Caco-2 (cell line): ENCODE measurements at regions of chr2 and their contacts with region 1.

Region 1: GRCh38 chr2:120174963-120175581 is 48.1 kb downstream of the TMEM185B start:
- DNase-seq: peak in 1 of 2 experiments; percentile 61
- H3K4me3 ChIP-seq: no peak overlapping the region
- H3K4me3 Mint-ChIP-seq: no peak overlapping the region
- H3K27ac Mint-ChIP-seq: no peak overlapping the region
- H3K4me1 ChIP-seq: no peaks in the 10 kb centered on the region
- H3K4me1 Mint-ChIP-seq: no peaks in the 10 kb centered on the region
- H3K27me3 ChIP-seq: no peaks in the 10 kb centered on the region
- H3K27me3 Mint-ChIP-seq: no peaks in the 10 kb centered on the region
- CTCF ChIP-seq: peak; percentile 73 to 77

Region 2: DNA sequence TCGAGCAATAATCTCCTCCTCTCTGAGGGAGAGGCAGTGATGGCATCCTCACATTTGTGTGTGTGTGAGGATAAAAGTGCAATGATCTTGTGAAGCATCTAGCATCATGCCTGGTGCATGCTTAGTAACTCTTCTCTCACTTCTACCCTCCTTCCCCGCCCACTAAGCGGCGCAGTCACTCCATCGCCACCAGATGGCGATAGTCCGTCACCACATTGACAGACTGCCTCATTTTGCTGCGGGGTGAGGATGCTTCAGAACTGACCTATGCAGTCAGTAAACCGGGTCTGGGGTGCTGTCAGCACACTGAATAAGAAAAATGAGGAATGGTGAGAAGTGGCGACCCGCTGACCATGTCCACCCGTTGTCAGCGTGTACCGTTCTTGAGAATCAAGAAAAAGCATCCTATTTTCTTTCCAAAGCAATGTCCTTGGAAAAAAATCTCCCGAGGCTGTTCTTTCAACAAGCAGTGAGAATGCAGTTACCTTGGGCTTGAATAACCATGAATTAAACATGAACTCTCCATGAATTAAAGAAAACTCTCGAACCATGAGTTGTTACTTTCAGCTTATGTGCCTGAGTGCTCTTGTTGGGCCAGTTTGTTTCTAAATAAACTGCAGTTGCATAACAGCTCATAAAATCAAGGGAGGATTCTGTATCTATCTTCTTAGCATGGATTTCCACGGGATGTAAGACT is 533.4 kb before region 1 on chr2:
- CTCF ChIA-PET with region 1: no interaction called
- POLR2A ChIA-PET with region 1: no interaction called
- intact Hi-C with region 1: loop called (anchors 1 kb)
- DNase-seq: peak; percentile 73 to 79
- H3K4me3 ChIP-seq: no peak overlapping the region
- H3K4me3 Mint-ChIP-seq: no peak overlapping the region
- H3K27ac Mint-ChIP-seq: no peak overlapping the region
- H3K4me1 ChIP-seq: no peaks in the 10 kb centered on the region
- H3K4me1 Mint-ChIP-seq: peaks cover 5% of the 10 kb centered on the region
- H3K27me3 ChIP-seq: no peaks in the 10 kb centered on the region
- H3K27me3 Mint-ChIP-seq: peaks cover 27% of the 10 kb centered on the region
- CTCF ChIP-seq: peak; percentile 91 to 98

Region 3: GRCh38 chr2:119702918-119703401 is 472.1 kb before region 1 on chr2:
- CTCF ChIA-PET with region 1: interaction called, 13 read pairs
- POLR2A ChIA-PET with region 1: no interaction called
- intact Hi-C with region 1: loop called (anchors 1 kb)
- DNase-seq: peak; percentile 74 to 85
- H3K4me3 ChIP-seq: no peak overlapping the region
- H3K4me3 Mint-ChIP-seq: no peak overlapping the region
- H3K27ac Mint-ChIP-seq: no peak overlapping the region
- H3K4me1 ChIP-seq: no peaks in the 10 kb centered on the region
- H3K4me1 Mint-ChIP-seq: peaks cover 12% of the 10 kb centered on the region
- H3K27me3 ChIP-seq: no peaks in the 10 kb centered on the region
- H3K27me3 Mint-ChIP-seq: no peaks in the 10 kb centered on the region
- CTCF ChIP-seq: peak; percentile 97

Region 4: DNA sequence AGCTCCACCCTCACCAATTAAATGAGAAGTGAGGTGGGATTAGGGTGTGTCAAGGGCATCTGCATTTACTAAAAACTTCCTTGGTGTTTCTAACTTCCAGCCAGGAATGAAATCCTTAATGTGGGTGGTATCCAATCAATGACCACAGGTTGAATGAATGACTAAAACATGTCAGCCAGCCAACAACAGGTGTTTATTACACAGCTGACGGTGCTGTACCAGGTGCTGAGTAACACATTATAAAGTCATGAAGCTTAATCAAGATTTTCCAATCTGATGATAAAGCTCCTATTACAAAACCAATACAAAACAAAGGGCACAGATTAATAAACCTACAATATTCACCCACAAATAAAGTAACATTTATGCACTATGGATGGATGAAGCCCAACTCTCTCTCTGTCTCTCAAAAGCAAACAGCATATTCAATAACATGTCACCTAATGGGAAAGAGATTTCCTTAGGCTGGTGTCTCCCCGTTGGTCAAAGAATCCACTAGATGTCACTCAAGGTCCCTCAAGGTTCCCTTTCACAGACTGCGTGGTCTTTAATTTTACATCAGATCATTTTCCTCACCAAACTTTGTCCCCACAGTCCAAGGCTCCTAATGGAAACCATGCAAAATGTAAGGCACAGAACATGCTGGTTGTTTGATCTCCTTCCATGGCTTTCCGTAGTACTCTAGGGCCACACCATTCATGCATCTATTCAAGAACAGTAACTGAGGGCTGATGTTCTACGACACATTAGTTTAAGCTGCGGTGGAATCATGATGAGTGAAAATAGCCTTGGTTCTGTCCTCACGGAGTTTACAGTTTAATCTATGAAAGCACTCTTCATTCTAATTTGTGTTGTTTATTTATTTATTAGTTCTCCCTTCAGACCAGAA is 421.8 kb before region 1 on chr2:
- CTCF ChIA-PET with region 1: interaction called, 4 read pairs
- POLR2A ChIA-PET with region 1: no interaction called
- intact Hi-C with region 1: loop called (anchors 1 kb)
- DNase-seq: peak in 1 of 2 experiments; percentile 66
- H3K4me3 ChIP-seq: no peak overlapping the region
- H3K4me3 Mint-ChIP-seq: no peak overlapping the region
- H3K27ac Mint-ChIP-seq: no peak overlapping the region
- H3K4me1 ChIP-seq: no peaks in the 10 kb centered on the region
- H3K4me1 Mint-ChIP-seq: peaks cover 1% of the 10 kb centered on the region
- H3K27me3 ChIP-seq: no peaks in the 10 kb centered on the region
- H3K27me3 Mint-ChIP-seq: peaks cover 5% of the 10 kb centered on the region
- CTCF ChIP-seq: peak; percentile 66 to 70

Region 5: GRCh38 chr2:119826370-119826961 is 348.6 kb before region 1 on chr2:
- CTCF ChIA-PET with region 1: no interaction called
- POLR2A ChIA-PET with region 1: no interaction called
- intact Hi-C with region 1: loop called (anchors 10 kb)
- DNase-seq: peak; percentile 48 to 65
- H3K4me3 ChIP-seq: no peak overlapping the region
- H3K4me3 Mint-ChIP-seq: no peak overlapping the region
- H3K27ac Mint-ChIP-seq: no peak overlapping the region
- H3K4me1 ChIP-seq: 0 out of 2 replicates have a peak, but pooled peaks cover 4% of the 10 kb centered on the region
- H3K4me1 Mint-ChIP-seq: peaks cover 7% of the 10 kb centered on the region
- H3K27me3 ChIP-seq: no peaks in the 10 kb centered on the region
- H3K27me3 Mint-ChIP-seq: no peaks in the 10 kb centered on the region
- CTCF ChIP-seq: peak; percentile 71 to 90

Region 6: DNA sequence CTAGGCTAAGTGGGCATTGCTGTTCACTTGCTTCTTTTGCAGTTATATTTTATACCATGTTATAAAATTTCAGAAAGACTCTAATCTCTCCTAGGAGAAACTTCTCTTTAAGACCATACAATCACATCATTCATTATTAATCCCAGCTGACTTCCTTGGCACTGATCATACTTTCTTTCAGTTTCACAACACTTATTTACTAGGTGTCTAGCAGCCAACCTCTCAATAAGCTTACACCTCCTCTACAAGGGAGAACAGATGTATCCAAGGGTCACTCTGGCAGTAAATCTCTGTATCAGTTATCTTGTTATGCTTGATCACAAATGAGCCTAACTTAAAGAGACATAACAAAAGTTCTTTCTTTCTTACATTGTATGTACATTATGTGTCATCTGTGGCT is 232.0 kb before region 1 on chr2:
- CTCF ChIA-PET with region 1: no interaction called
- POLR2A ChIA-PET with region 1: no interaction called
- intact Hi-C with region 1: loop called (anchors 10 kb)
- DNase-seq: no peak
- H3K4me3 ChIP-seq: no peak overlapping the region
- H3K4me3 Mint-ChIP-seq: no peak overlapping the region
- H3K27ac Mint-ChIP-seq: no peak overlapping the region
- H3K4me1 ChIP-seq: no peaks in the 10 kb centered on the region
- H3K4me1 Mint-ChIP-seq: no peaks in the 10 kb centered on the region
- H3K27me3 ChIP-seq: no peaks in the 10 kb centered on the region
- H3K27me3 Mint-ChIP-seq: no peaks in the 10 kb centered on the region
- CTCF ChIP-seq: no peak

Region 7: DNA sequence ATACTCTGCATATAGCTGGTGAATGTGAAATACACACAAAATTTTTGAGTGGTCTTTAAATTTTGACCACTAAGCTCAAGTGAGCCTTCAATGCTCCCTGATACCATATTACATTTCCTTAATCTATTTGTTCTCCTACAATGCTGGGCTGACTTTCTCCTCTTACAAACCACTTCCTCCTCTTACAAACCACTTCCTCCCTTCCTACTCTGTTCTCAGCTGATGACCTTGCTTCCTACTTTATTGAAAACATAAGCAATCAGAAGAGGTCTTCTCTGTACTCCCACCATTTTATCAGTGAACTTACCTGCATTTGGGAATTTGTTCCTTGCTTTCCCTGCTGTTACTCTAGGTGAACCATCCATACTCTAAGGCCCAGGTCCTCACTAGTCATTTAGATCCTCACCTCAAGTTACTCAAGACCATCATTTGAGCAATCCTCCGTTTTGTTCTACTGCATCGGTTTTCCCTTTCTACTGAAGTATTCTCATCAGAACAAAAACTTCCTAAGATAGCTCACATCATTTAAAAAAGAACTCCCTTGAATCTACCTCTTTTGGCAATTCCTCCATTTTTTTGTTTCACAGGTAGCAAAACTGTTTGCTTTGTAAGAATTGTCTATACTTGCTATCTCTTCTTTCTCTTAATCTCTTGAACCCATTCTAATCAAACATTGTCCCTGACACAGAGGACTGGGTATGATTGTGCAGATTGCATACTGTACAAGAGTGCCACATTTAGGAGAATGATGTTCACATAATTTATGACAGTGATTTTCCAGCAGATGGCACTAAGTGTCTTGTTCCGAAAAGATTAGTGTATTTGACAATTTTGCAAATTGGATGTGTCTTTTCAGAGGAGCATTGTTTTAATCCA is 65.6 kb before region 1 on chr2:
- CTCF ChIA-PET with region 1: interaction called, 7 read pairs
- POLR2A ChIA-PET with region 1: no interaction called
- intact Hi-C with region 1: loop called (anchors 1 kb)
- DNase-seq: peak in 1 of 2 experiments; percentile 10
- H3K4me3 ChIP-seq: no peak overlapping the region
- H3K4me3 Mint-ChIP-seq: no peak overlapping the region
- H3K27ac Mint-ChIP-seq: no peak overlapping the region
- H3K4me1 ChIP-seq: no peaks in the 10 kb centered on the region
- H3K4me1 Mint-ChIP-seq: peaks cover 9% of the 10 kb centered on the region
- H3K27me3 ChIP-seq: no peaks in the 10 kb centered on the region
- H3K27me3 Mint-ChIP-seq: no peaks in the 10 kb centered on the region
- CTCF ChIP-seq: peak in 1 of 2 experiments; percentile 10